Ascending aorta (tissue), 2 donors: ENCODE measurements at regions of chr3 and their contacts with region 1.

Region 1: GRCh38 chr3:19364148-19364547 is 215.8 kb downstream of the KCNH8 start:
- DNase-seq: no peak
- H3K4me3 ChIP-seq: no peak overlapping the region
- H3K27ac ChIP-seq: peak overlapping the region in 1 of 2 donors; percentile 38
- H3K4me1 ChIP-seq: peaks cover 0 to 13% of the 10 kb centered on the region in 2 donors
- H3K27me3 ChIP-seq: no peaks in the 10 kb centered on the region
- CTCF ChIP-seq: no peak

Region 2: DNA sequence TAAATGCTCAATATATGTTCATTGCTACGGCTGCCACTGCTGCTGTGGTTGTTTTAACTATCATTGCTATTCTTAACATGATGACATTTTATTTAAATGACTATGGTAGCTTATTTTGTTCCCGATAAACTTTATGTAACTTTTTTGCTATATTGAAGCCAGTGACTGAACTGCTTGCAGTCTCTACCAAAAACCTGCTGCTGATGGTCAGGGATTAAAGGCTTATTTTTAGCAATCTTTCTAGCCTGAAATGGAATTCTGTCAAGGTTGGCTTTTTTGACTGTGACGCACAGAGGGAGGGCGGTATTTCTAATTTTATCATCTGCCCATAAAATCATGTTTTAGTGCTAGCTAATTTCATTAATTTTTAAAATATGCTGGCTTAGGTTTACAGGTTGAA is 56.0 kb after region 1 on chr3:
- intact Hi-C with region 1: loop called (anchors 5 kb)
- DNase-seq: no peak
- H3K4me3 ChIP-seq: peak overlapping the region in 1 of 2 donors; percentile 37
- H3K27ac ChIP-seq: peak overlapping the region; percentile 80 to 92
- H3K4me1 ChIP-seq: peaks cover 0 to 8% of the 10 kb centered on the region in 2 donors
- H3K27me3 ChIP-seq: no peaks in the 10 kb centered on the region
- CTCF ChIP-seq: no peak

Region 3: DNA sequence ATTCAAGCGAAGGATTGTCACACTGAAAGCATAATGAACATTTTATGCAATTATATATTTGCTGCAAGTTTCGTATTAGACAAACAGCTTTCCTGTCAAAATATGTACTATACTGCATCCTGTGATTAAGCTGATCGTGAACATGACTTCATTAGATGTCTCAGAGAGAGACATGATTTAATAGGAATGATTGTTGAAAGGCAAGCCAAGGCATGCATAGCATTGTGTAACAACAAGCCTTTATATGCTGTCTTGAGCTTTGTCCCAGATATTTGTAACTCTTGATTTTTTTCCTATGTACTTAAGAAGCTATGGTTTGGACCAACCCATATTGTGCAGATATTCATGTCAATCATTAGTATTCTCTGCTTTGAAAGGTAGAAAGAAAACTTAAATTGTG is 93.3 kb after region 1 on chr3:
- intact Hi-C with region 1: loop called (anchors 2 kb)
- DNase-seq: no peak
- H3K4me3 ChIP-seq: no peak overlapping the region
- H3K27ac ChIP-seq: peak overlapping the region; percentile 31 to 73
- H3K4me1 ChIP-seq: peaks cover 0 to 15% of the 10 kb centered on the region in 2 donors
- H3K27me3 ChIP-seq: no peaks in the 10 kb centered on the region
- CTCF ChIP-seq: no peak

Region 4: GRCh38 chr3:19476281-19476680 is 112.1 kb after region 1 on chr3:
- intact Hi-C with region 1: loop called (anchors 5 kb)
- DNase-seq: no peak
- H3K4me3 ChIP-seq: no peak overlapping the region
- H3K27ac ChIP-seq: peak overlapping the region in 1 of 2 donors; percentile 2
- H3K4me1 ChIP-seq: no peaks in the 10 kb centered on the region
- H3K27me3 ChIP-seq: no peaks in the 10 kb centered on the region
- CTCF ChIP-seq: no peak

Region 5: DNA sequence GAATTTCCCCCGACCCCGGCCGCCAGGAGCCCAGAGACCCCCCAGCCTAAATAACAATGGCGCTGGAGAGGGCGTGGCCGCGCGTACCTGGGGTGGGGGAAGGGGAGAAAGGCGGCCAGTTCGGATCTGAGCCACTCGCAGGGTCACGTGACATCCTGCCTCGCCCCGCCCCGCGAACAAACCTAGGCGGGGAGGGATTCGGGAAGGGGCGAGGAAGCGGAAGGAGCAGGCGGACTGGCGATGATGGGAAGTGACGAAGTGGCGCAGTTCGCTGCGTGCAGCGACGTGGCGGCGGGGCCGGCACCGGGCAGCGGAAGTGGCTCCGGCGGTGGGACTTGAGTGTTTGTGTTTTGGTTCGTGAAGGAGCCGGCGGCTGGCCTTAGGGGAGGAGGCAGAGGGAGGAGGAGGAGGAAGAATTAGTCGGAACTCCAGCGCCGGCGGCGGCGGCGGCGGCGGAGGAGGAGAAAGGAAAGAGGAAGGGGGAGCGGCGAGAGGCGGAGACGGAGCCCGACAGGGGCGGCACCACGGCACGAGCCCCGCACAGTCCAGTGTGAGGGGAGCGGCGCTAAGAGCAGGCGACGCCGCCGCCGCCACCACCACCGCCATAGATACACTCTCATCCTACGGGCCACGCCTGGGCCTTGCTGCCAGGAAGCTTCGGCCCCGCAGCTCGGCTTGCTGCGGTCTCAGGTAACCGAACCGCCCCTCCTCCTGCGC is 582.8 kb after region 1 on chr3 and contains the start of gene RAB5A:
- intact Hi-C with region 1: loop called (anchors 10 kb)
- DNase-seq: peak; percentile 95 to 99
- H3K4me3 ChIP-seq: peak within 1 kb of the TSS; percentile 94 to 99
- H3K27ac ChIP-seq: peak within 1 kb of the TSS; percentile 100
- H3K4me1 ChIP-seq: peaks cover 10 to 21% of the 10 kb centered on the region in 2 donors
- H3K27me3 ChIP-seq: no peaks in the 10 kb centered on the region
- CTCF ChIP-seq: no peak
- total RNA-seq, gene RAB5A: 54.9 TPM